ENCODE measurements at regions of chr7 and their contacts with region 1.

Region 1: DNA sequence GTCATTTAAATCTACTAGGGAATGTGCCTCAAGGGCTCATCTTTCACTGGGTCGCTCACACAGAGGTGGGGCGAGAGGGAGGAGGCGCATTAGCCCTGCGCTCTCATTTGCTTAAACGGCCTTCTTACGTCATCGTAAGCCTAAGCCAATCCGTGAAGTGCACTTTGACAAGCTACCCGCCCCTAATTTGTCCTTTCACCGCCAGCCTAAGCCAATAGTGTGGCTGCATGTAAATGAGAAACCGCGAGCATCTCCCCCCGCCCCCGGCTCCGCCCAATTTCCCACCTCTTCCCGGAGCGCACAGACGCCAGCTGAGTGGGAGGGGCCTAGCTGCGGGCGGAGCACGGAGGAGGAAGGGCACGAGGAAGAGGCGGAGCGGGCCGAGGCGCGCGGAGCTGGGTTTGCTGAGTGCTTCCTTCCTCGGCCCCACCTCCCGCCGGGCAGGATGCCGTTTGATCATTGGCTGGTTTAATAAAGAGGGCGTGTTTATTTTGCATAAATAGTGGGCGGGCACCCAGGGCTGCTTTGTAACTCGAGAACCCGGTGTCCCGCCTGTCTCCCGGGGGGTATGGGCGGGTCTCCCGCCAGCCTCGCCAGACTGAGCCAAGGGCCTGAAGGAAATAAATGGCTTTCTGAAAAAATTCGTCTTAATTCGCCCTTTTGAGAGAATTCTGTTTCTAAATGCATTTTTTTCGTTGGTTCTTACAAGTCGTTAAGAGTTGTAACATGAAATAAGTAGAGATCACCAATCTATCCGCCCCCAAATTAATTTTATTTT is 289.5 kb upstream of the NFE2L3 start:
- DNase-seq: peak; percentile 99
- H3K4me3 Mint-ChIP-seq: peak overlapping the region; percentile 63
- H3K27ac Mint-ChIP-seq: peak overlapping the region; percentile 89
- H3K4me1 Mint-ChIP-seq: peaks cover 46% of the 10 kb centered on the region
- H3K27me3 Mint-ChIP-seq: peaks cover 52% of the 10 kb centered on the region

Region 2: GRCh38 chr7:25125137-25125946 is 737.1 kb before region 1 on chr7 and contains the start of gene CYCS:
- intact Hi-C with region 1: loop called (anchors 2 kb)
- DNase-seq: peak; percentile 99
- H3K4me3 Mint-ChIP-seq: peak within 1 kb of the TSS; percentile 94
- H3K27ac Mint-ChIP-seq: peak within 1 kb of the TSS; percentile 97
- H3K4me1 Mint-ChIP-seq: peaks cover 24% of the 10 kb centered on the region
- H3K27me3 Mint-ChIP-seq: no peaks in the 10 kb centered on the region
- total RNA-seq, gene CYCS: 235 and 251 TPM in 2 replicates

Region 3: DNA sequence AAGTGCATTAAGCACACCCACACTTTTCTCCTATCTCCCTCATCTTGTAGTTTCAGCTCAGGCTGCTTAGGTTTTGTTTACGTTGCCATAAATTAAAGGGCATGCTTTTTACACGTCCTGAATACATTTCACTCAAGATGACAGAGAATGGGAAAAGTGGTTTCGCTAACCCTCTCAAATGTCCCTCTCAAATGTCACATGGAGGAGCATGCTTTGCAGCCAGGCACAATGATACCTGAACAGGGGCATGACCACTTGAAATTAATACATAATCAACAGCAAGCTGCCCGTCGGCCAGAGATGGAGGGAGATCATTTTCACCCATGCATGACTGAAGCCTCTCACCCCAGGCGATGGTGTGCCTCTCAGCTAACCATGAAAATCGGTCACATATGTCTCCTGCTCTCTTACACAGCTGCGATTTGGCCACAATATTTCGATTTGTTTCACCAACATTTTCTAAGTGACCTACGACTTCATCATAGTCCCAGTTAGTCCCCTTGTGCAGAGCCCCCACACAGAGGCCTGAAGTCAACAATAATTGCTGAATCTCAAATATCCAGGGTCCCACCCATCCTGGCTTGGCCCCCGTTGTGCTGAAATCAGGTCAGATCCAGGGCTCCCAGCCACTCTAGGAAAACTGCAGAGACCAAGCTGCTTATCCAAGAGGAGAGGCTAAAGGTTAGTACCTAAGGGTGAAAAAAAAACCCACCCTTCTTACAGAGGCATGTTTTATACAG is 84.3 kb before region 1 on chr7:
- intact Hi-C with region 1: no loop called
- DNase-seq: no peak
- H3K4me3 Mint-ChIP-seq: no peak overlapping the region
- H3K27ac Mint-ChIP-seq: no peak overlapping the region
- H3K4me1 Mint-ChIP-seq: no peaks in the 10 kb centered on the region
- H3K27me3 Mint-ChIP-seq: no peaks in the 10 kb centered on the region

Region 4: DNA sequence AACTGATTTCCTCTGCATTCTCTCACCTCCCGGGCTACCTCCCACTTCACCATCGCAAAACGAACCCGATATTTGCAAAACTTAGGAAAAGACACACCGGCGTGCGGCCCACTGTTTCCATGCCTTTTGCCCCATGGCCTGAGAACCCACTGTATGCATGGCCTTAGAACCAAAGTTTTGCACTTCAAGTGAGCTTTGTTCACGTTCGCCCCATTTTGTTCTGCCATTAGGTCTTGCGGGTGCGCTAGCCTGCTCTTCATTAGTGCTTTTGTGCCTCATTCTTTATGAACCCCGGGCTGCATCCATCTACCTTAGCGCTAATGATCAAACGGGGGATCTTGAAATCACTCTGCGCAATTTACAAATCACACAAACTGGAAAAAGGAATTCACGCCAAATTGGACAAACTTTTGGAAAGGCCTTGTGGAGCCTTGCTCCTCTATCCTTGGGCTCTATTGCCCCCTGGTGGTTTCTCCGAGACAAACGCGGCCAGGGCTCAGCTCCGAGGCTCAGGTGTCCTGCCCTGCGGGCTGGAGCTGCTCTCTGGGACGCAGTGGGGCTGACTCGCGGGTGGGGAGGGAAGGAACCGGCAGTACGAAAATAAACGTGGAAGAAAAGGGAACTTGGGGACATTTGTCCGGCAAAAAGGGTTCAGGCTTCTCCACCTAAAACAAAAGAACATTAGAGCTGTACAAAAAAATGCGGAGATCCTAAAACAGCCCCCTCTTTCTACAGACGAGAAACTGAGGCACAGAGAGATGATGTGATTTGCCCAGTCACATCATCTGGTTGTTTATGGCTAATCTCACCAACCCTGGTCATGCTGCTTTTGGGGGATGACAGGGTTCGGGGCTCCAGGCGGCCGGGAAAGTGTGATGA is 10.9 kb before region 1 on chr7:
- intact Hi-C with region 1: loop called (anchors 1 kb)
- DNase-seq: peak; percentile 63
- H3K4me3 Mint-ChIP-seq: peak overlapping the region; percentile 78
- H3K27ac Mint-ChIP-seq: peak overlapping the region; percentile 74
- H3K4me1 Mint-ChIP-seq: peaks cover 21% of the 10 kb centered on the region
- H3K27me3 Mint-ChIP-seq: peaks cover 43% of the 10 kb centered on the region

Region 5: GRCh38 chr7:25968205-25968993 is 106.0 kb after region 1 on chr7:
- intact Hi-C with region 1: loop called (anchors 2 kb)
- DNase-seq: no peak
- H3K4me3 Mint-ChIP-seq: no peak overlapping the region
- H3K27ac Mint-ChIP-seq: peak overlapping the region; percentile 35
- H3K4me1 Mint-ChIP-seq: peaks cover 19% of the 10 kb centered on the region
- H3K27me3 Mint-ChIP-seq: peaks cover 31% of the 10 kb centered on the region

Region 6: GRCh38 chr7:26376175-26376917 is 513.9 kb after region 1 on chr7:
- intact Hi-C with region 1: loop called (anchors 10 kb)
- DNase-seq: peak; percentile 27
- H3K4me3 Mint-ChIP-seq: peak overlapping the region; percentile 81
- H3K27ac Mint-ChIP-seq: peak overlapping the region; percentile 71
- H3K4me1 Mint-ChIP-seq: peaks cover 4% of the 10 kb centered on the region
- H3K27me3 Mint-ChIP-seq: peaks cover 7% of the 10 kb centered on the region

Region 7: GRCh38 chr7:26864309-26865093 is 1002.1 kb after region 1 on chr7 and contains the start of gene SKAP2:
- intact Hi-C with region 1: loop called (anchors 1 kb)
- DNase-seq: peak; percentile 86
- H3K4me3 Mint-ChIP-seq: peak within 1 kb of the TSS; percentile 92
- H3K27ac Mint-ChIP-seq: peak within 1 kb of the TSS; percentile 65
- H3K4me1 Mint-ChIP-seq: peaks cover 15% of the 10 kb centered on the region
- H3K27me3 Mint-ChIP-seq: peaks cover 49% of the 10 kb centered on the region
- total RNA-seq, gene SKAP2: 8.2 and 9.2 TPM in 2 replicates

Region 8: GRCh38 chr7:27150568-27151340 is 1288.3 kb after region 1 on chr7:
- intact Hi-C with region 1: loop called (anchors 5 kb)
- DNase-seq: peak; percentile 55
- H3K4me3 Mint-ChIP-seq: peak overlapping the region; percentile 60
- H3K27ac Mint-ChIP-seq: no peak overlapping the region
- H3K4me1 Mint-ChIP-seq: peaks cover 17% of the 10 kb centered on the region
- H3K27me3 Mint-ChIP-seq: peaks cover 88% of the 10 kb centered on the region

Measured in activated T-helper 2 cell treated with anti-CD3 and anti-CD28 coated beads, Interferon-gamma antibody, Interleukin-2, Interleukin-4, amounts not matched to agents 10 μg/mL and 5 μg/mL and 100 μg/mL, durations not matched to agents 14 hours and 24 hours and 36 hours (primary cell).